Naive thymus-derived CD4-positive, alpha-beta T cell (primary cell): ENCODE measurements at regions of chr9 and their contacts with region 1.

Region 1: GRCh38 chr9:14466429-14466818 is 152.5 kb upstream of the NFIB start:
- DNase-seq: no peak
- ATAC-seq: no peak
- H3K4me3 ChIP-seq: no peak overlapping the region
- H3K4me3 Mint-ChIP-seq: no peak overlapping the region
- H3K27ac ChIP-seq: no peak overlapping the region
- H3K27ac Mint-ChIP-seq: no peak overlapping the region
- H3K4me1 ChIP-seq: no peaks in the 10 kb centered on the region
- H3K4me1 Mint-ChIP-seq: no peaks in the 10 kb centered on the region
- H3K27me3 ChIP-seq: no peaks in the 10 kb centered on the region
- H3K27me3 Mint-ChIP-seq: peaks cover 0 to 8% (median 8%) of the 10 kb centered on the region in 5 donors

Region 2: DNA sequence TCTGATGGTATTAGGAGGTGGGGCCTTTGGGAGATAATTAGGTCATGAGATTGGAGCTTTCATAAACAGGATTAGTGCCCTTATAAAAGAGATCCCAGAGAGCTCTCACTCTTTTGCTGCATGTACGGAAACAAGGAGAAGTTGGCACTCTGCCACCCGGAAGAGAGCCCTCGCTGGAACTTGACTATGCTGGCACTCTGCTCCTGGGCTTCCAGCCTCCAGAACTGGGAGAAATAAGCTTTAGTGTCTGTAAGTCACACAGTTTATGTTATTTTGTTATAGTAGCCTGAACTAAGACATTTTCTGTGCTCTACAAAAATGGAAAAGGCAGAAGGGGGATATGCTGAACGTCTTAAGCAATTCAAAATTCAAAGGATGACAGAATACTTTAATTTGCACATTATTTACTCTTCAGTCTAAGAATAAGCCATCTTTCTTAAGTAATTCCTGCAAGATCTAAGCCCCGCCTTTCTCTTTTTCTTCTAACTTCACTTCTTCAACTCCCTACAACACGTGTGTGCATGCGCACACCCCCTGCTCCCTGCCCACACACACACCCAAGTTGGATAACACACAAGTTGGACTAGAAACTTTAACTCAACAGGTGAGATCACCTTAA is 169.8 kb before region 1 on chr9:
- CTCF ChIA-PET with region 1: no interaction called
- POLR2A ChIA-PET with region 1: no interaction called
- intact Hi-C with region 1: no loop called
- DNase-seq: no peak
- ATAC-seq: no peak
- H3K4me3 ChIP-seq: no peak overlapping the region
- H3K4me3 Mint-ChIP-seq: no peak overlapping the region
- H3K27ac ChIP-seq: no peak overlapping the region
- H3K27ac Mint-ChIP-seq: no peak overlapping the region
- H3K4me1 ChIP-seq: no peaks in the 10 kb centered on the region
- H3K4me1 Mint-ChIP-seq: no peaks in the 10 kb centered on the region
- H3K27me3 ChIP-seq: no peaks in the 10 kb centered on the region
- H3K27me3 Mint-ChIP-seq: peaks cover 4 to 37% (median 27%) of the 10 kb centered on the region in 5 donors

Region 3: GRCh38 chr9:14645648-14646047 is 179.2 kb after region 1 on chr9:
- CTCF ChIA-PET with region 1: no interaction called
- POLR2A ChIA-PET with region 1: no interaction called
- intact Hi-C with region 1: loop called in 1 of 2 experiments (anchors 10 kb)
- DNase-seq: no peak
- ATAC-seq: no peak
- H3K4me3 ChIP-seq: no peak overlapping the region
- H3K4me3 Mint-ChIP-seq: no peak overlapping the region
- H3K27ac ChIP-seq: no peak overlapping the region
- H3K27ac Mint-ChIP-seq: no peak overlapping the region
- H3K4me1 ChIP-seq: no peaks in the 10 kb centered on the region
- H3K4me1 Mint-ChIP-seq: peaks cover 0 to 4% (median 0%) of the 10 kb centered on the region in 7 donors
- H3K27me3 ChIP-seq: no peaks in the 10 kb centered on the region
- H3K27me3 Mint-ChIP-seq: no peaks in the 10 kb centered on the region

Region 4: DNA sequence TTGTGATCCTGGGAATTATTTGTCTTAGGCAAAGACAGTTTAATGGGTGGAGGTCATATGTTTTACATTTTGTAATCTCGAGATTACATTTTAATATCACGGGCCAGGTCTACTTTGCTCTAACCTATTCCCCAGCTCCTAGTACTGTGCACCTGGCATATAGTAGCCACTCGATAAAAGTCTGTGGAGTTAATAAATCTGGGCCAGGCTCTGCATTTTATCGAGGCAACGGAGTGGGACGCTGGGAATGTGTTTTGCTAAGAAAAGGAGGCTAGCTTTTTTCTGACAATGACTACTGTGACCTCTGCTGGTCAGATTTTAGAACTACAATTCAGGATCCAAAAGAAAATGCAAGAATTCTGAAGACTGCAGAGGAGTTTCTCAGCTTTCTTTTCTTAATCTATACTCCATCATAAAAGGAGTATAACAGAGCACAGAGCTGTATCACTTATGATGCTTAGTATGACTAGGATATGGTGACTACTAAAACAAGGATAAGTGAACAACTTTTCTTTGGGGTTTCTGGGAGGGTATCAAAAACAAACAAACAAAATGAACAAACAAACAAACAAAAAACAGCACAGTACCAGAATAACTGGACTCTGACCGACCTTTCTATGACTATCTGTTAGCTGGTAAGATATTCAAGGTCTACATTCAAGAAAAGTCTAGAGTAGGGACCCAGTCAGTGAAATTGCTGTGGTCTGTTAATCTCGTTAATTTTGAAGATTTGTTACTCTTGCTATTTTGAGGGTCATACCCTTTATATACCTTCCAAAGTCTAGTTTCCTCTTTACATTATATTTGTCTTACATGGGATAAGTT is 302.2 kb after region 1 on chr9:
- CTCF ChIA-PET with region 1: no interaction called
- POLR2A ChIA-PET with region 1: no interaction called
- intact Hi-C with region 1: loop called in 1 of 2 experiments (anchors 2 kb)
- DNase-seq: peak in 5 of 9 donors; percentile 24 to 35 (median 28)
- ATAC-seq: no peak
- H3K4me3 ChIP-seq: no peak overlapping the region
- H3K4me3 Mint-ChIP-seq: no peak overlapping the region
- H3K27ac ChIP-seq: no peak overlapping the region
- H3K27ac Mint-ChIP-seq: no peak overlapping the region
- H3K4me1 ChIP-seq: no peaks in the 10 kb centered on the region
- H3K4me1 Mint-ChIP-seq: no peaks in the 10 kb centered on the region
- H3K27me3 ChIP-seq: peaks cover 0 to 5% of the 10 kb centered on the region in 2 donors
- H3K27me3 Mint-ChIP-seq: peaks cover 8 to 40% (median 17%) of the 10 kb centered on the region in 5 donors